A673 (cell line): ENCODE measurements at regions of chr1 and their contacts with region 1.

Region 1: GRCh38 chr1:28642847-28643635 is at the start of gene TAF12:
- DNase-seq: peak; percentile 98
- H3K4me3 ChIP-seq: peak within 1 kb of the TSS; percentile 81
- H3K27ac ChIP-seq: peak within 1 kb of the TSS; percentile 82
- H3K4me1 ChIP-seq: peaks cover 16% of the 10 kb centered on the region
- H3K27me3 ChIP-seq: no peaks in the 10 kb centered on the region
- CTCF ChIP-seq: peak; percentile 54
- total RNA-seq, gene TAF12: 17.9 and 22.6 TPM in 2 replicates

Region 2: GRCh38 chr1:27166351-27166802 is 1476.7 kb before region 1 on chr1:
- CTCF ChIA-PET with region 1: no interaction called
- POLR2A ChIA-PET with region 1: interaction called, 12 read pairs
- intact Hi-C with region 1: no loop called
- DNase-seq: no peak
- H3K4me3 ChIP-seq: no peak overlapping the region
- H3K27ac ChIP-seq: no peak overlapping the region
- H3K4me1 ChIP-seq: no peaks in the 10 kb centered on the region
- H3K27me3 ChIP-seq: no peaks in the 10 kb centered on the region
- CTCF ChIP-seq: no peak

Region 3: DNA sequence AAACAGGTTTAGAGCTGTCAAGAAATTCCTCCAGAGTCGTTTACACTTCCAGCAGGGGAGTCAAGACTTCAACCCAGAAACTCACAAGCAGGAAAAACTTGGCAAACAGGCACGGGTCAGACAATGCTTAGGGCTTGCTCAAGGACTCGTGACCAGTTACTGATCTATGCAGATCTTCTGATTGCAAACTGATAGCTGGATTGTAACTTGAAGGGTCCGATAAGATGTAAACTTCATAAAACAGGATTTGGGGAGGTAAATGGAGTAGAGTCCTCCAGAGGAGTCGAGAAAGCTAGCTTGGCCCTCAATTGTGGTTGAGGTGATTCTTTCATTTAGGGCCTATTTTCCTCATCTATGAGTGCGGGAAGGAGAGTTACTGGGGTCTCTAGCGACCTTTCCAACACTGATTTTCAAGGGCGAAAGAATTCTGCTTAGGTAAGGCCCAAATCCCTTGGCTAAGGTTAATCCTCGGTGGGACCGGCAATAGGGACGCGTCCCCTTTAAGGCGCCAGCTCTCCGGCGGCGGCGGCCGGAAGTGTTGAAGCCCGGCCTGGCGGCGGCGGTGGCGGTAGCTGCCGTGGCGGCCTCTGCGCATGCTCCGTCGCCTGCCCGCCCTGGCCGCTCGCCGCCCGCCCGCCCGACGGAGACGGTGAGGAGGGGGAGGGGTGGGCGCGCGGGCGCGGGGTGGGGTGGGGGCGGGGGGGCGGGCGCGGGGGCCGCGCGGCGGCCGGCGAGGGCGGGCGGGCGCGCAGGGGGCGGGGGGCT is 25.3 kb after region 1 on chr1 and contains the start of gene GMEB1:
- CTCF ChIA-PET with region 1: interaction called, 10 read pairs
- POLR2A ChIA-PET with region 1: no interaction called
- intact Hi-C with region 1: no loop called
- DNase-seq: peak; percentile 93
- H3K4me3 ChIP-seq: peak within 1 kb of the TSS; percentile 87
- H3K27ac ChIP-seq: peak within 1 kb of the TSS; percentile 96
- H3K4me1 ChIP-seq: peaks cover 9% of the 10 kb centered on the region
- H3K27me3 ChIP-seq: no peaks in the 10 kb centered on the region
- CTCF ChIP-seq: no peak
- total RNA-seq, gene GMEB1: 20.9 and 23.0 TPM in 2 replicates

Region 4: GRCh38 chr1:28860332-28861073 is 217.5 kb after region 1 on chr1:
- CTCF ChIA-PET with region 1: interaction called, 10 read pairs
- POLR2A ChIA-PET with region 1: no interaction called
- intact Hi-C with region 1: no loop called
- DNase-seq: peak; percentile 54
- H3K4me3 ChIP-seq: no peak overlapping the region
- H3K27ac ChIP-seq: no peak overlapping the region
- H3K4me1 ChIP-seq: no peaks in the 10 kb centered on the region
- H3K27me3 ChIP-seq: no peaks in the 10 kb centered on the region
- CTCF ChIP-seq: no peak